ENCODE measurements at regions of chr18 and their contacts with region 1.

Region 1: GRCh38 chr18:31610286-31611205 is 18.9 kb downstream of the TTR start:
- DNase-seq: no peak
- H3K4me3 Mint-ChIP-seq: no peak overlapping the region
- H3K27ac Mint-ChIP-seq: no peak overlapping the region
- H3K4me1 Mint-ChIP-seq: no peaks in the 10 kb centered on the region
- H3K27me3 Mint-ChIP-seq: peaks cover 3% of the 10 kb centered on the region

Region 2: DNA sequence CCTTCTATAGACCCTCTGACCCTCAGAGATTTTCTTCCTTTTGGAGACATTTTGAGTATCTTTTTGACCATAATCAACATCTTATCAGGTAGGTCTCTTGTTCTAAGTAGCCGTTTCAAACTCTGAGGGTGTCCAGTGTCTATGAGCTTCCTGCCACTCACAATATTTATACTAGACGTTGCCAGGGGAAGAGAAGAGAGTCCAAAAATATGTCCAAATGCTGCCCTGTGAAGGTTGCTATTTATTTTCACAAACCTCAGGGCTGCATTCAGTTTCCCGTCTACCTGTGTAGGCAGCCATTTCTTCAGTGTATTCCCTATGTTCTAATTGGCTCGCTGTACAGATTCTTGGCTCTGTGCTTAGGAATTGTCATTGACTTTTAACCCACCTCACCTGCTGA is 293.6 kb before region 1 on chr18:
- intact Hi-C with region 1: no loop called
- DNase-seq: no peak
- H3K4me3 Mint-ChIP-seq: no peak overlapping the region
- H3K27ac Mint-ChIP-seq: no peak overlapping the region
- H3K4me1 Mint-ChIP-seq: no peaks in the 10 kb centered on the region
- H3K27me3 Mint-ChIP-seq: no peaks in the 10 kb centered on the region

Region 3: GRCh38 chr18:31677592-31677991 is 67.0 kb after region 1 on chr18:
- intact Hi-C with region 1: no loop called
- DNase-seq: no peak
- H3K4me3 Mint-ChIP-seq: no peak overlapping the region
- H3K27ac Mint-ChIP-seq: no peak overlapping the region
- H3K4me1 Mint-ChIP-seq: no peaks in the 10 kb centered on the region
- H3K27me3 Mint-ChIP-seq: peaks cover 30% of the 10 kb centered on the region

Region 4: GRCh38 chr18:31722369-31722957 is 111.9 kb after region 1 on chr18:
- intact Hi-C with region 1: loop called (anchors 1 kb)
- DNase-seq: peak; percentile 50
- H3K4me3 Mint-ChIP-seq: no peak overlapping the region
- H3K27ac Mint-ChIP-seq: no peak overlapping the region
- H3K4me1 Mint-ChIP-seq: peaks cover 6% of the 10 kb centered on the region
- H3K27me3 Mint-ChIP-seq: peaks cover 21% of the 10 kb centered on the region